ENCODE measurements at regions of chr4 and their contacts with region 1.

Region 1: DNA sequence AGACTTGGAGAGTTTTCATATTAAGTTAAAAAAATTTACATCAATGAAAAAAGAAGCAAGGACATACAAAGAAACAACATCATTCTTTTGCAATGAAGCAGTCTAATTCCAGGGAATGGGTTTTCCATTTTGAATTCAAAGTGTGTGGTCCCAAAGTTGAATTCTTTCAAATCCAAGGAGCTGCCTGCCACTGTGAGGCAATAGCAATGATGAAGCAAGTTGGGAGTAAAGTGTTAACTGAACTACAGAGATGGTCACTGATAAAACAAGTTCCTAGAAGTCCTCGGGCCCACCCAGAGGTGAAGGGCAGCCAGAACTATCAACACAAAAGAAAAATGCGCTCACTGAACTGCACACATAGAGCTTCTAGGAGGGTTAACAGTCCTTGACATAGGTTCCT is 115.9 kb downstream of the RAB28 start:
- DNase-seq: peak; percentile 31 to 91 (median 60)
- ATAC-seq: peak; percentile 97
- H3K4me3 ChIP-seq: peak overlapping the region; percentile 31
- H3K27ac ChIP-seq: peak overlapping the region; percentile 82
- H3K4me1 ChIP-seq: peaks cover 3 to 18% of the 10 kb centered on the region in 2 experiments; a peak in 3 of 5 replicates
- H3K27me3 ChIP-seq: no peaks in the 10 kb centered on the region
- CTCF ChIP-seq: peak in 2 of 3 experiments; percentile 30 to 54; a peak in 3 of 6 replicates
- EP300 ChIP-seq: peak; percentile 96
- POLR2A ChIP-seq: peak; percentile 55
- RAD21 ChIP-seq: peak; percentile 54 to 60

Region 2: DNA sequence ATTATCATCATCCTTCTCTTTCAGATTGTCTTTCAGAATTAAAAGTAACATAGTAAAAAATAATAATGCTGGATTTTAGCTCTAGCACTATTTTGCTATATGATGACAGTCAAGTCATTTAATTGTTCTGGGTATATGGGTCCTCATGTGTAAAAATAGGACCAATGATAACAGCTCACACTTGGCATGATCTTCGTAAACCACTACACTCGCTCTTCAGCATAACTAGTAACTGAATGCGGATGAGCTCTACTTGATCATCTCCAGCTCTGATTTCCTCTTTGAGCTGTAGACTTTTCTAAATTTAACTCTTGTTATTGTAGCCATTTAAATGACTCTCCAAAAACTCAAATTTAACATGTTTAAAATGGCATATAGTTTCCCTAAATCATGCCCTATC is 1107.8 kb before region 1 on chr4:
- CTCF ChIA-PET with region 1: no interaction called
- POLR2A ChIA-PET with region 1: no interaction called
- in situ Hi-C with region 1: no loop called
- intact Hi-C with region 1: no loop called
- DNase-seq: no peak
- ATAC-seq: no peak
- H3K4me3 ChIP-seq: no peak overlapping the region
- H3K27ac ChIP-seq: no peak overlapping the region
- H3K4me1 ChIP-seq: no peaks in the 10 kb centered on the region
- H3K27me3 ChIP-seq: no peaks in the 10 kb centered on the region
- CTCF ChIP-seq: no peak
- EP300 ChIP-seq: no peak
- POLR2A ChIP-seq: no peak
- RAD21 ChIP-seq: no peak

Region 3: DNA sequence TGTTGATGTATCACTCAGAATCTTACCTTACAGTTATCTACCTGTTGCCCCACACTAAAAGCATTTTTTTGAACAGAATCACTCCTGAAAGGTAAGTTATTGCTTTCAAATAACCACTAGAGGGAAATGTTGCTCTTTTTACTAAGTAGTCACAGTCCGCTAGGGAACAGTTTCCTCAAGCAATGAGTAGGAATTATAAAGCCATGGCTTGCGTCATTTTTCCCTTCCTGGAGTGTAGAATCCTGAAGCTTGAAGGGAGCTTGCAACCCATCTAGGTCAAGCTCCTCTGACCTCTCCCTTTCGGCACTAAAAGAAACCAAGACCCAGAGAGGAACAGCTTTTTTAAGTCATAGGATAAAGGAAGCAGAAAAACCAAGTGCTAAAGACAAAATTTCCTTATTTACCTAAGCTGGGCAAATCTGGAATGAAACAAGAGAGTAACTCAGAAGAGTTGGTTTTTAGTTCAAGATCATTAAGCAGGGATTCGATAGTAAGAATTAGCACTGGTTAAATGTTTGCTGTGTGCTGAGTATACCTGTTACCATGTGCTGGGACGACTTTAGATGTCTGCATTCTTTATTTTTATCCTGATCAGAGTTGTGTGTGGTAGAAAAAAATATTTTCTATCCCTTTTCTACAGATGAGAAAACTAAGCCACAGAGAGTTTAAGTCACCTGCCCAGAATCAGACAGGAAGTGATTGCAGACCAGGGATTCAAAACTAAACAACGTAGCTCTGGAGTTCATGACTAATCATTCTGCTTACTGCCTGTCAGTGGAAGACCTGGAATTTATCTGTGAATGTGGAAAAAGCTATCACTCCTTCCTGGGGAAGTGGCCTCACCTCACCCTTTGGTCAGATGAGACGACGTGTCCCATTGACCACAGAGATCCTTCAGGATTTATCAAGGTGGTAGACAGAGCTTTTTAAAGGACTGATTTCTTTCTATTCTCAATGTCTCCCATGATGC is 515.6 kb before region 1 on chr4:
- CTCF ChIA-PET with region 1: no interaction called
- POLR2A ChIA-PET with region 1: no interaction called
- in situ Hi-C with region 1: no loop called
- intact Hi-C with region 1: loop called (anchors 5 kb)
- DNase-seq: peak in 2 of 4 experiments; percentile 18 to 37
- ATAC-seq: peak; percentile 88
- H3K4me3 ChIP-seq: no peak overlapping the region
- H3K27ac ChIP-seq: no peak overlapping the region
- H3K4me1 ChIP-seq: no peaks in the 10 kb centered on the region
- H3K27me3 ChIP-seq: no peaks in the 10 kb centered on the region
- CTCF ChIP-seq: peak; percentile 33 to 63 (median 40); a peak in 4 of 6 replicates
- EP300 ChIP-seq: no peak
- POLR2A ChIP-seq: no peak
- RAD21 ChIP-seq: peak; percentile 84

Region 4: GRCh38 chr4:13355111-13355880 is 12.9 kb before region 1 on chr4:
- CTCF ChIA-PET with region 1: no interaction called
- POLR2A ChIA-PET with region 1: interaction called, 12 read pairs
- in situ Hi-C with region 1: no loop called
- intact Hi-C with region 1: no loop called
- DNase-seq: no peak
- ATAC-seq: peak; percentile 28; the same call in 2 of the 3 replicates
- H3K4me3 ChIP-seq: no peak overlapping the region
- H3K27ac ChIP-seq: no peak overlapping the region
- H3K4me1 ChIP-seq: no peaks in the 10 kb centered on the region; a peak in 1 of 5 replicates
- H3K27me3 ChIP-seq: no peaks in the 10 kb centered on the region
- CTCF ChIP-seq: no peak
- EP300 ChIP-seq: no peak
- POLR2A ChIP-seq: no peak
- RAD21 ChIP-seq: no peak

Region 5: DNA sequence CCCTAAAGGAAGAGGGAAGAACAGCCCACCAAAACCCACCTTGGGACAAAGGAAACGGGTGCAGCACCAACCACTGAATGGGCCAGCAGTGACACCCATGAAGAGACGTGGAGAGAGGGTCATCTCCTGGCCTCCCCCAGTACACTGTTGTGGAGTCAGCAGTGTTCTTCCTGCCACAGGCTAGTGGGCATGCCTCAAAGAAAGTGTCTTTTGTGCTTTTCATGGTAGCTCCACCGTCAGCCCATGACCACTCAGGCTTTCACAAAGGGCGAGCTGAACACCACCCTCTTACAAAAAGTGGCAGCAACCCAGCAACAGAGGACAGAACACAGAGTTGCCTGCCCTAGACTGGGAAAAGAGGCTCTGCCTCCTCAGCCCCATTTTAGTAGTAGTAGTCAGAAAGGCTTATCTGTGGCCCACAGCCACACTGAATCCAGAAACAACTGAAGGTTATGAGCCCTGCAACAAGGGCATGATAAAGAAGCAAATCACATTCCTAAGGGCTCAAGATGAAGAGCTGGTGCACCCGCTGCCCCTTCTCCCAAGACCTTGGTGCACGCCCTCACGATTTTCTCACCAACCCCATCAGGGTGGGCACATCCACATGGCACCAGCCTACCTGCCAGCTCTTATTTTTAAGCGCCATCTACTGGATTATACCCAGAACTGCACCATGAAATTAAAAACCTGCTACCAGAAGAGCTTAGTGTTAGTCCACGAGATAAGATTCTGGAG is 62.8 kb after region 1 on chr4:
- CTCF ChIA-PET with region 1: no interaction called
- POLR2A ChIA-PET with region 1: no interaction called
- in situ Hi-C with region 1: no loop called
- intact Hi-C with region 1: loop called (anchors 5 kb)
- DNase-seq: peak in 2 of 4 experiments; percentile 37 to 55
- ATAC-seq: peak; percentile 88
- H3K4me3 ChIP-seq: no peak overlapping the region
- H3K27ac ChIP-seq: peak overlapping the region; percentile 37; the same call in 2 of the 3 replicates
- H3K4me1 ChIP-seq: peaks cover 8 to 15% of the 10 kb centered on the region in 2 experiments; a peak in 3 of 5 replicates
- H3K27me3 ChIP-seq: no peaks in the 10 kb centered on the region
- CTCF ChIP-seq: peak; percentile 47 to 80 (median 57)
- EP300 ChIP-seq: no peak
- POLR2A ChIP-seq: no peak
- RAD21 ChIP-seq: peak in 1 of 2 experiments; percentile 73; a peak in 3 of 4 replicates

Region 6: GRCh38 chr4:13484122-13484748 is 116.0 kb after region 1 on chr4 and contains the start of gene RAB28:
- CTCF ChIA-PET with region 1: no interaction called
- POLR2A ChIA-PET with region 1: no interaction called
- in situ Hi-C with region 1: no loop called
- intact Hi-C with region 1: loop called (anchors 5 kb)
- DNase-seq: peak; percentile 88 to 94 (median 91)
- ATAC-seq: peak; percentile 93
- H3K4me3 ChIP-seq: peak within 1 kb of the TSS; percentile 91
- H3K27ac ChIP-seq: peak within 1 kb of the TSS; percentile 99
- H3K4me1 ChIP-seq: peaks cover 0 to 5% of the 10 kb centered on the region in 2 experiments; a peak in 4 of 5 replicates
- H3K27me3 ChIP-seq: no peaks in the 10 kb centered on the region
- CTCF ChIP-seq: no peak; a peak in 1 of 6 replicates
- EP300 ChIP-seq: no peak
- POLR2A ChIP-seq: peak; percentile 68
- RAD21 ChIP-seq: no peak
- polyA plus RNA-seq, gene RAB28: 6.7 to 9.5 TPM

Region 7: DNA sequence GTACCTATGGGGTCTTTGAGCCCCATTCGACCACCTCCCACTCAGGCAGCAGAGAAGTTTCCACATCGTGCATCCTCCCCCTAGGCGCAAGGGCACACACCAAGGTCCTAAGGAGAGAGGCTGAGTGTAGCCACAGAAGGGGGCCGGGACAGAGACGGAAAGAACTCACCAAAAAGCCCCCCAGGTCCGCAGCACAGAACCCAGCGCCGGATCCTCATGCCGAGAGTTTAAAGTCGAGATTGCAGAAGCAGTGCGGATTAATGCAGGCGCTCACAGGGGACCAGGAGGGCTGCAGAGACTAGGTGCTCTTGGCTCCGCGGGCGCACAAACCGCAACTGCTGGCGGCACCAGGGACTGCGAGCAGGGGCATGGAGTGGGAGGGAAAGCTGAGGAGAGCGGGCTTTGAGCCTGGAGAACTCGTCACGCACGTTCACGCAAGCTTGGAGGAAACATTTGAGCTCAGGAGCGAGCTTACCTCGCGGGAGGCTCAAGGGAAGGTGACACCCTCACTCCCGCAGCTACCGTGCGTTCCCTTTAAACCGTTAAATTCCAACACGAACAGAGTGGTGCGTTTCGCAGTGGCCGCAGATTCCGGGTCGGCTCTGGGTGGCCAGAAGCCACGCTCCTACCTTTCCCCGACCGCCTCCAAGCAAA is 167.6 kb after region 1 on chr4:
- CTCF ChIA-PET with region 1: no interaction called
- POLR2A ChIA-PET with region 1: no interaction called
- in situ Hi-C with region 1: no loop called
- intact Hi-C with region 1: loop called (anchors 5 kb)
- DNase-seq: peak in 1 of 4 experiments; percentile 12
- ATAC-seq: peak; percentile 41
- H3K4me3 ChIP-seq: no peak overlapping the region
- H3K27ac ChIP-seq: no peak overlapping the region
- H3K4me1 ChIP-seq: peaks cover 9 to 20% of the 10 kb centered on the region in 2 experiments; a peak in 3 of 5 replicates
- H3K27me3 ChIP-seq: peaks cover 44 to 71% of the 10 kb centered on the region in 2 experiments
- CTCF ChIP-seq: no peak
- EP300 ChIP-seq: no peak
- POLR2A ChIP-seq: no peak
- RAD21 ChIP-seq: no peak